ENCODE measurements at regions of chr14 and their contacts with region 1.

Region 1: DNA sequence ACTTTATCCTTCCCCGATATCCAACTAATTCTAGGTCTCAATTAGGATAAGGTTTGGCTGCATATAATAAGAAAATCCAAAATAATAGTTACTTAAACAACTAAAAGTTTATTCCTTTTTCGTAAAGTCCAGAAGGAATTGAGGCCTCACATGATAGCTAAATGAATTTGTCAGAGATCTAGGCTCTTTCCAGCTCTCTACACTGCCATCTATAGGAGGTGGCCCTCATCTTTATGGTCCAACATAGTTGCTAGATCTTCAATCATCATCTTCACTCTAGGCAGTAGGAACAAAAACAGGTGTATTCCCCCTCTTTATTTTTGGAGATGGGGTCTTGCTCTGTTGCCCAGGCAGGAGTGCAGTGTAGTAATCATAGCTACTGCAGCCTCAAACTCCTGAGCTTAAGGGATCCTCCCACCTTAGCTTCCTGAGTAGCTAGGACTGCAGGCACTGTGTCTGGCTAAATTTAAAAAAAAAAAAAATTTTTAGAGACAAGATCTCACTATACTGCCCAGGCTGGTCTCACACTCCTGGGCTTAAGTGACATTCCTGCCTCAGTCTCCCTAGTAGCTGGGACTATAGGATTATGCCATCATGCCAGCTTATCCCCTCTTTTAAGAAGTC is 46.5 kb upstream of the SAV1 start:
- DNase-seq: peak in 3 of 9 donors; percentile 12 to 23 (median 20)
- ATAC-seq: peak; percentile 73
- H3K4me3 ChIP-seq: no peak overlapping the region
- H3K4me3 Mint-ChIP-seq: no peak overlapping the region
- H3K27ac ChIP-seq: no peak overlapping the region
- H3K27ac Mint-ChIP-seq: no peak overlapping the region
- H3K4me1 ChIP-seq: no peaks in the 10 kb centered on the region
- H3K4me1 Mint-ChIP-seq: no peaks in the 10 kb centered on the region
- H3K27me3 ChIP-seq: no peaks in the 10 kb centered on the region
- H3K27me3 Mint-ChIP-seq: peaks cover 0 to 6% (median 4%) of the 10 kb centered on the region in 5 donors

Region 2: DNA sequence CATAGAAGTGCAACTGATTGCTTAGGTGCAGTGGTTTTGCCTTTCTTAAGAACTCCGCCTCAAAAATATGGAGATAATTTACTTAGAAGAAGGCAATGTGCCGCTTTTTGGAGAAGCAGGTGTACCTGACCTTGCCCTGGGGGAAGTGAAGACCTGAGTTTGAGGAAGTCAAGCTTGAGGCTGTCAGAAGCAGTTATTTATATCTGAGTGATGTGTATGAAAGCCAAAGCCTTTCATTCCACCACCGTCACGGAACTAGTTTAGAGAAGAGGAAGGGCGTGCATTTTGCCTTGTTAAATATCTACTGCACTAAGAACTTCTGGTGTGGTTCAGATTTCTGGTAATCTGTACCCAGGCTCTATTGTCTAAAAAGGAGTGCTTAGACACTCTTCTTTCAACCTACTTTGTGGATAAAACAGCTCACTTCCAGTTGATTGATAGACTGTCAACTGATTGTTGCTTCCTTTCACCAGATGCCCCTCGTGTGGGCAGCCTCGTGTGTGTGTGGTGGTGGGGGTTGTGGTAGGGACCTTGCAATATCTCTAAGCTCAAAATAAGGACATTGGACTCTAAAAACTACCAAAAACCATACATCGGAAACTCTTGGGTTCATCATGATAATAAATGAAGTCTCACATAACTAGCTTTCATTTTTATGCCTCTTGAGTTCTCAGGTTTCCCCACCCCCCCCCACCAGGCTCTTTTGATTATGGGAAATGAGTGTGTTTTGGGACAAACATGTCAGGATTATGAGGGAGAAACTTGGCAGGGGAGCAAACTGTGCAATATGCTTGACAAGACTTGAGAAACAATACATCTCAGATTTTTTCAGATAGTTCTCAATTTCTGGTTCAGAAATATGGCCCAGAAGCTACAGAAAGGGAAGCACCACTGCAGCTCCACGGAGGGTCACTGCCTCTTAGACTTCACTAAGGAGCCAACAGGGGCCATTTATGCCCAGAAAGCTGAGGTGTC is 743.1 kb before region 1 on chr14:
- CTCF ChIA-PET with region 1: no interaction called
- POLR2A ChIA-PET with region 1: no interaction called
- intact Hi-C with region 1: no loop called
- DNase-seq: peak in 8 of 9 donors; percentile 59 to 94 (median 90)
- ATAC-seq: peak; percentile 92
- H3K4me3 ChIP-seq: peak overlapping the region; percentile 40
- H3K4me3 Mint-ChIP-seq: peak overlapping the region; percentile 75 to 96 (median 86)
- H3K27ac ChIP-seq: peak overlapping the region; percentile 74
- H3K27ac Mint-ChIP-seq: peak overlapping the region; percentile 96 to 99 (median 99)
- H3K4me1 ChIP-seq: peaks cover 35 to 49% of the 10 kb centered on the region in 2 donors
- H3K4me1 Mint-ChIP-seq: peaks cover 32 to 88% (median 63%) of the 10 kb centered on the region in 7 donors
- H3K27me3 ChIP-seq: no peaks in the 10 kb centered on the region
- H3K27me3 Mint-ChIP-seq: no peaks in the 10 kb centered on the region

Region 3: DNA sequence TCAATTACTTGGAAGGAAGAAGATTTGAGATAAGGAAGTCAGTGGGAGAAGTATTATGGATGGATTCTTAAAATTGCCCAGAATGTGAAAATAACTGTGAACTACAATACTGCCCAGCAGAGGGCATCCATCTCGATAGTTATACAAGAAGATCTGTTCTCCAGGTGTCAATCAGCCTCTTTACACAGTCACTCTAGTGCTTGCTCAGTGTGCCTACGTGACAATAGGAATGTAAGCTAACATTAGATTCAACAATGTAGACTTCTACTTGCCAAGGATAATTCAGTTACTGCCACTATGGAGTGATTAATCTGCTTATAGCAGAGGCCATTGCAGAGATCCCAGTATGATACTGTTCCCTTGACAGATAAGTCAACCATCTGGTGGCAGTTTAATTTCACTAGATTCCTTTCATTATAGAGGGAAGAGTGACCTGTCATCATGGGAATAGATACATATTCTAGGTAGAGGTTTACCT is 171.6 kb before region 1 on chr14:
- CTCF ChIA-PET with region 1: interaction called, 3 read pairs
- POLR2A ChIA-PET with region 1: no interaction called
- intact Hi-C with region 1: loop called in 1 of 2 experiments (anchors 1 kb)
- DNase-seq: peak in 7 of 9 donors; percentile 5 to 51 (median 38)
- ATAC-seq: peak; percentile 84
- H3K4me3 ChIP-seq: no peak overlapping the region
- H3K4me3 Mint-ChIP-seq: no peak overlapping the region
- H3K27ac ChIP-seq: no peak overlapping the region
- H3K27ac Mint-ChIP-seq: no peak overlapping the region
- H3K4me1 ChIP-seq: no peaks in the 10 kb centered on the region
- H3K4me1 Mint-ChIP-seq: peaks cover 5 to 13% (median 12%) of the 10 kb centered on the region in 7 donors
- H3K27me3 ChIP-seq: no peaks in the 10 kb centered on the region
- H3K27me3 Mint-ChIP-seq: peaks cover 0 to 7% (median 0%) of the 10 kb centered on the region in 5 donors

Region 4: GRCh38 chr14:50599700-50600444 is 114.7 kb before region 1 on chr14:
- CTCF ChIA-PET with region 1: interaction called, 4 read pairs
- POLR2A ChIA-PET with region 1: no interaction called
- intact Hi-C with region 1: loop called (anchors 2 to 5 kb)
- DNase-seq: peak in 4 of 9 donors; percentile 7 to 21 (median 16)
- ATAC-seq: no peak
- H3K4me3 ChIP-seq: no peak overlapping the region
- H3K4me3 Mint-ChIP-seq: no peak overlapping the region
- H3K27ac ChIP-seq: no peak overlapping the region
- H3K27ac Mint-ChIP-seq: no peak overlapping the region
- H3K4me1 ChIP-seq: no peaks in the 10 kb centered on the region
- H3K4me1 Mint-ChIP-seq: peaks cover 0 to 4% (median 0%) of the 10 kb centered on the region in 7 donors
- H3K27me3 ChIP-seq: no peaks in the 10 kb centered on the region
- H3K27me3 Mint-ChIP-seq: peaks cover 0 to 3% (median 0%) of the 10 kb centered on the region in 5 donors

Region 5: GRCh38 chr14:50619556-50620141 is 94.9 kb before region 1 on chr14:
- CTCF ChIA-PET with region 1: no interaction called
- POLR2A ChIA-PET with region 1: no interaction called
- intact Hi-C with region 1: loop called in 1 of 2 experiments (anchors 1 kb)
- DNase-seq: peak in 3 of 9 donors; percentile 7 to 11 (median 7)
- ATAC-seq: peak; percentile 41
- H3K4me3 ChIP-seq: no peak overlapping the region
- H3K4me3 Mint-ChIP-seq: no peak overlapping the region
- H3K27ac ChIP-seq: no peak overlapping the region
- H3K27ac Mint-ChIP-seq: no peak overlapping the region
- H3K4me1 ChIP-seq: no peaks in the 10 kb centered on the region
- H3K4me1 Mint-ChIP-seq: no peaks in the 10 kb centered on the region
- H3K27me3 ChIP-seq: no peaks in the 10 kb centered on the region
- H3K27me3 Mint-ChIP-seq: no peaks in the 10 kb centered on the region

Region 6: GRCh38 chr14:50667996-50668825 is 46.4 kb before region 1 on chr14 and contains the start of gene SAV1:
- CTCF ChIA-PET with region 1: no interaction called
- POLR2A ChIA-PET with region 1: no interaction called
- intact Hi-C with region 1: loop called in 1 of 2 experiments (anchors 2 kb)
- DNase-seq: peak; percentile 18 to 65 (median 35)
- ATAC-seq: peak; percentile 59
- H3K4me3 ChIP-seq: peak within 1 kb of the TSS; percentile 84
- H3K4me3 Mint-ChIP-seq: peak within 1 kb of the TSS in 2 of 10 donors; percentile 92 to 95
- H3K27ac ChIP-seq: peak within 1 kb of the TSS; percentile 65
- H3K27ac Mint-ChIP-seq: peak within 1 kb of the TSS in 6 of 9 donors; percentile 54 to 94 (median 88)
- H3K4me1 ChIP-seq: peaks cover 0 to 10% of the 10 kb centered on the region in 2 donors
- H3K4me1 Mint-ChIP-seq: peaks cover 11 to 23% (median 20%) of the 10 kb centered on the region in 7 donors
- H3K27me3 ChIP-seq: no peaks in the 10 kb centered on the region
- H3K27me3 Mint-ChIP-seq: peaks cover 0 to 7% (median 0%) of the 10 kb centered on the region in 5 donors
- total RNA-seq, gene SAV1: 7.2 to 9.4 (median 8.7) TPM

Measured in naive thymus-derived CD4-positive, alpha-beta T cell (primary cell).